Caco-2 (cell line): ENCODE measurements at regions of chr1 and their contacts with region 1.

Region 1: DNA sequence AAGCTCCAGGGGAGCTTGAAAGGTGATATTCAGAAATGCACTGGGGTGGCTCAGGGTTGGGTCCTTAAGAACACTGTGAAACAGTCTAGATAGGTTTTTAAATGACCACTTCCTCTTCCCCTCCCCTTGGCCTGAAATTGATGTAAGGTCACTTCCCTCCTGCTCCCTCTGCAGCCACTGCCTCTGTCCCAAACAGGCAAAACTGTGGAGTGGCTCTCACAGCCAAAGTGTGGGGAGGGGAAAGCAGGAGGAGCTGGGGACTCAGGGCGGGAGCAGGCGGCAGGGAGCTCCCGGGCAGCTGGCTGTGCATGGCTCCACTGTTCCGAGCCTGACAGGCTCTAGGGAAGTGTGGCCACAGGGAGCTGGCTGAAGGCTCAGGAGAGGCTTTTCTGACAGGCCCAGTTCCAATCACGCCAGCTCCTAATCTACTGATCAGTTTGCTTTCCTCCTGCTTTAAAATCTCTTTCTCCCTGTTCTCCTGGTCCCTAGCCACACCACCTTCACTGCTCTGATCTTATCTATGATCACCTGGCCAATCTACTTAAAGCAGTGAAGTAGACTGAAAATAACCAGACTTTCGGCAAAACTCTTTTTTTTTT is 5.1 kb upstream of the CSRP1 start:
- DNase-seq: no peak
- H3K4me3 ChIP-seq: no peak overlapping the region
- H3K4me3 Mint-ChIP-seq: no peak overlapping the region
- H3K27ac Mint-ChIP-seq: no peak overlapping the region
- H3K4me1 ChIP-seq: peaks cover 57% of the 10 kb centered on the region
- H3K4me1 Mint-ChIP-seq: peaks cover 43% of the 10 kb centered on the region
- H3K27me3 ChIP-seq: no peaks in the 10 kb centered on the region
- H3K27me3 Mint-ChIP-seq: no peaks in the 10 kb centered on the region
- CTCF ChIP-seq: no peak

Region 2: GRCh38 chr1:201127755-201128455 is 384.1 kb before region 1 on chr1:
- CTCF ChIA-PET with region 1: no interaction called
- POLR2A ChIA-PET with region 1: no interaction called
- intact Hi-C with region 1: no loop called
- DNase-seq: no peak
- H3K4me3 ChIP-seq: no peak overlapping the region
- H3K4me3 Mint-ChIP-seq: no peak overlapping the region
- H3K27ac Mint-ChIP-seq: no peak overlapping the region
- H3K4me1 ChIP-seq: no peaks in the 10 kb centered on the region
- H3K4me1 Mint-ChIP-seq: no peaks in the 10 kb centered on the region
- H3K27me3 ChIP-seq: no peaks in the 10 kb centered on the region
- H3K27me3 Mint-ChIP-seq: peaks cover 3% of the 10 kb centered on the region
- CTCF ChIP-seq: no peak

Region 3: DNA sequence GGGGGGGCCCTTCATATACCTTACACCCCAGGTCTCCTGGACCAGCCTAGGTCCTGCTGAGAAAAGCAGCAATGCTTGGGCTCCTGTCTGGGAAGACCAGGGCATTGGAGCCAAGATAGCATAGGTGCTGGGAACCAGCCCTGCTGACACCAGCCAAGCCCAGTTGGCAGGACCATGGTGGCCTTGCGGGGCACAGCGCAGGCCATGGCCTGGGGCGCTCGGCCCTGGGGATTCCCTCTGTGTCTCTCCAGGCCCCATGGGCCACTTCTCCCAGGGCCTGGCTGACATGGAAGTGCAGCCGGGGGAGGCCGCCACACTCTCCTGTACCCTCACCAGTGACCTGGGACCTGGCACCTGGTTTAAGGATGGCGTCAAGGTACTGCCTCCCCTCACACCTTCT is 298.1 kb before region 1 on chr1:
- CTCF ChIA-PET with region 1: no interaction called
- POLR2A ChIA-PET with region 1: no interaction called
- intact Hi-C with region 1: no loop called
- DNase-seq: peak in 1 of 2 experiments; percentile 17
- H3K4me3 ChIP-seq: no peak overlapping the region
- H3K4me3 Mint-ChIP-seq: no peak overlapping the region
- H3K27ac Mint-ChIP-seq: no peak overlapping the region
- H3K4me1 ChIP-seq: no peaks in the 10 kb centered on the region
- H3K4me1 Mint-ChIP-seq: no peaks in the 10 kb centered on the region
- H3K27me3 ChIP-seq: no peaks in the 10 kb centered on the region
- H3K27me3 Mint-ChIP-seq: peaks cover 20% of the 10 kb centered on the region
- CTCF ChIP-seq: no peak

Region 4: DNA sequence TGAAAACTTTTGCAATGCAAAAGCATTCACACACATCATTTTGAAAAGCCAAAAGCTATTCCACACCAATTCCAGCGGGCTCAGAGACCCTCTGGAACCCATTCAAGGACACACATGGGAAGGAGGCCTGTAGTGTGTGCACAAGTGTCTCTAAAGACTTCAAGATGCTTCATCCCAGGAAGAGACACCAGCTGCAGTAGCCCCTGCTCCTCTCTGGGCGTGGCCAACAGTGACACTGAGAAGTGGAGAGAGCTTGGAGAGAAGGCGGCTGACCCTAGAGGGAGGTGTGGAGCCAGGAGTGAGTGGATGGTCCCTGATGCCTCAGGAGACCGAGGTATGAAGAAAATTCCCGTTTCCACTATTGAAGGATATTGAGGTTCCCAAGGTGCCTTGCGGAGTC is 75.6 kb before region 1 on chr1:
- CTCF ChIA-PET with region 1: interaction called, 14 read pairs
- POLR2A ChIA-PET with region 1: no interaction called
- intact Hi-C with region 1: loop called (anchors 1 kb)
- DNase-seq: peak; percentile 66 to 72
- H3K4me3 ChIP-seq: no peak overlapping the region
- H3K4me3 Mint-ChIP-seq: no peak overlapping the region
- H3K27ac Mint-ChIP-seq: no peak overlapping the region
- H3K4me1 ChIP-seq: no peaks in the 10 kb centered on the region
- H3K4me1 Mint-ChIP-seq: peaks cover 6% of the 10 kb centered on the region
- H3K27me3 ChIP-seq: no peaks in the 10 kb centered on the region
- H3K27me3 Mint-ChIP-seq: peaks cover 3% of the 10 kb centered on the region
- CTCF ChIP-seq: peak in 1 of 2 experiments; percentile 44

Region 5: GRCh38 chr1:201495471-201496295 is 16.4 kb before region 1 on chr1:
- CTCF ChIA-PET with region 1: interaction called, 22 read pairs
- POLR2A ChIA-PET with region 1: interaction called, 3 read pairs
- intact Hi-C with region 1: no loop called
- DNase-seq: no peak
- H3K4me3 ChIP-seq: no peak overlapping the region
- H3K4me3 Mint-ChIP-seq: no peak overlapping the region
- H3K27ac Mint-ChIP-seq: no peak overlapping the region
- H3K4me1 ChIP-seq: peaks cover 21% of the 10 kb centered on the region
- H3K4me1 Mint-ChIP-seq: peaks cover 18% of the 10 kb centered on the region
- H3K27me3 ChIP-seq: no peaks in the 10 kb centered on the region
- H3K27me3 Mint-ChIP-seq: no peaks in the 10 kb centered on the region
- CTCF ChIP-seq: no peak

Region 6: DNA sequence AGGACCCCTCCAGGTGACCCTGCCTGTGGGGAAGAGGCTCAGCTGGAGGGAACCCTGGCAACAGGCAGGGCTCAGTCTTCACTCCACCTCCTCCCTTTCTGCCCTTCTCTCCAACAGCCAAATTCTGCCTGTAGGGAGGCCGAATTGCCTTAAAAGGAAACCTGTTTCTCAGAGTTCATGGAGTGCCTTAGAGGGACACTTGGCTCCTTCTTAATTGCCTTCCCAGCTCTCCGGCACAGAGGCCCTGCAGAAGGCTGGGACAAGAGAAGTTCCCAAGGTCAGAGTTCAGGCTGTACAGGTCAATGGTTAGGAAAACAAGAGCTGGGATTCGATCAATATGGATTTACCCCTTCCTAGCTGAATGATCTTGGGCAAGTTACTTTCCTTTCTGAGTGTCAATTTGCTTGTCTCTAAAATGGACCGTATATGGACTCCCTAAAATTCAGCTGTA is 11.3 kb before region 1 on chr1:
- CTCF ChIA-PET with region 1: interaction called, 61 read pairs
- POLR2A ChIA-PET with region 1: interaction called, 12 read pairs
- intact Hi-C with region 1: loop called (anchors 1 kb)
- DNase-seq: no peak
- H3K4me3 ChIP-seq: no peak overlapping the region
- H3K4me3 Mint-ChIP-seq: no peak overlapping the region
- H3K27ac Mint-ChIP-seq: peak overlapping the region; percentile 28
- H3K4me1 ChIP-seq: peaks cover 55% of the 10 kb centered on the region
- H3K4me1 Mint-ChIP-seq: peaks cover 33% of the 10 kb centered on the region
- H3K27me3 ChIP-seq: no peaks in the 10 kb centered on the region
- H3K27me3 Mint-ChIP-seq: no peaks in the 10 kb centered on the region
- CTCF ChIP-seq: no peak

Region 7: DNA sequence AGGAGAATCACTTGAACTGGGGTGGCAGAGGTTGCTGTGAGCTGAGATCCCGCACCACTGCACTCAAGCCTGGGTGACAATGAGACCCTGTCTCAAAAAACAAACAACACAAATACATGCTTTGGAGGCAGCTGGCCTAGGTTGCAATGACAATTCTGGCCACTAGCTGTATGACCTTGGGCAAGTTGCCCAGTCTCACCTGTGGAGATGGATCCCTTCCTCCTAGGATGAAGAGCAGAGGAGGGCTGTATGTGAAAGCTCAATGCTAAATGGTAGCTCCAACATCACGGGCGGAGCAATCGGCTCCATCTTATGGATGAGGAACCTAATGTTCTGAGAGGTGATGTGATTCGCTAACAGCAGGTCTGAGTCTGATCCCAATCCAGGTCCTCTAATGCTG is 1636.1 kb after region 1 on chr1:
- CTCF ChIA-PET with region 1: no interaction called
- POLR2A ChIA-PET with region 1: no interaction called
- intact Hi-C with region 1: no loop called
- DNase-seq: no peak
- H3K4me3 ChIP-seq: no peak overlapping the region
- H3K4me3 Mint-ChIP-seq: no peak overlapping the region
- H3K27ac Mint-ChIP-seq: no peak overlapping the region
- H3K4me1 ChIP-seq: peaks cover 12% of the 10 kb centered on the region; the same call in 1 of the 2 replicates
- H3K4me1 Mint-ChIP-seq: peaks cover 23% of the 10 kb centered on the region
- H3K27me3 ChIP-seq: no peaks in the 10 kb centered on the region
- H3K27me3 Mint-ChIP-seq: no peaks in the 10 kb centered on the region
- CTCF ChIP-seq: peak; percentile 27 to 35